ENCODE measurements at regions of chr19 and their contacts with region 1.

Region 1: GRCh38 chr19:32405431-32406161 is at the start of gene DPY19L3:
- DNase-seq: peak; percentile 93
- H3K4me3 Mint-ChIP-seq: peak within 1 kb of the TSS; percentile 82
- H3K27ac Mint-ChIP-seq: peak within 1 kb of the TSS; percentile 77
- H3K4me1 Mint-ChIP-seq: peaks cover 26% of the 10 kb centered on the region
- H3K27me3 Mint-ChIP-seq: no peaks in the 10 kb centered on the region
- total RNA-seq, gene DPY19L3: 8.3 to 9.5 TPM

Region 2: GRCh38 chr19:32345261-32346207 is 60.1 kb before region 1 on chr19 and contains the start of gene ZNF507:
- CTCF ChIA-PET with region 1: no interaction called
- POLR2A ChIA-PET with region 1: interaction called, 37 read pairs
- DNase-seq: peak; percentile 88
- H3K4me3 Mint-ChIP-seq: peak within 1 kb of the TSS; percentile 98
- H3K27ac Mint-ChIP-seq: peak within 1 kb of the TSS; percentile 90
- H3K4me1 Mint-ChIP-seq: peaks cover 41% of the 10 kb centered on the region
- H3K27me3 Mint-ChIP-seq: peaks cover 10% of the 10 kb centered on the region
- total RNA-seq, gene ZNF507: 23.4 to 23.7 TPM

Region 3: GRCh38 chr19:32580901-32581703 is 175.5 kb after region 1 on chr19 and contains the start of gene PDCD5:
- CTCF ChIA-PET with region 1: no interaction called
- POLR2A ChIA-PET with region 1: interaction called, 11 read pairs
- DNase-seq: peak; percentile 97
- H3K4me3 Mint-ChIP-seq: peak within 1 kb of the TSS; percentile 91
- H3K27ac Mint-ChIP-seq: peak within 1 kb of the TSS; percentile 79
- H3K4me1 Mint-ChIP-seq: peaks cover 30% of the 10 kb centered on the region
- H3K27me3 Mint-ChIP-seq: peaks cover 5% of the 10 kb centered on the region
- total RNA-seq, gene PDCD5: 121 to 129 TPM